Transverse colon (tissue), 4 donors: ENCODE measurements at regions of chr10 and their contacts with region 1.

Region 1: GRCh38 chr10:129438024-129438423 is 29.0 kb upstream of the MGMT start:
- DNase-seq: no peak
- H3K4me3 ChIP-seq: no peak overlapping the region
- H3K27ac ChIP-seq: no peak overlapping the region
- H3K4me1 ChIP-seq: no peaks in the 10 kb centered on the region
- H3K27me3 ChIP-seq: no peaks in the 10 kb centered on the region
- CTCF ChIP-seq: no peak
- EP300 ChIP-seq: no peak
- POLR2A ChIP-seq: no peak

Region 2: DNA sequence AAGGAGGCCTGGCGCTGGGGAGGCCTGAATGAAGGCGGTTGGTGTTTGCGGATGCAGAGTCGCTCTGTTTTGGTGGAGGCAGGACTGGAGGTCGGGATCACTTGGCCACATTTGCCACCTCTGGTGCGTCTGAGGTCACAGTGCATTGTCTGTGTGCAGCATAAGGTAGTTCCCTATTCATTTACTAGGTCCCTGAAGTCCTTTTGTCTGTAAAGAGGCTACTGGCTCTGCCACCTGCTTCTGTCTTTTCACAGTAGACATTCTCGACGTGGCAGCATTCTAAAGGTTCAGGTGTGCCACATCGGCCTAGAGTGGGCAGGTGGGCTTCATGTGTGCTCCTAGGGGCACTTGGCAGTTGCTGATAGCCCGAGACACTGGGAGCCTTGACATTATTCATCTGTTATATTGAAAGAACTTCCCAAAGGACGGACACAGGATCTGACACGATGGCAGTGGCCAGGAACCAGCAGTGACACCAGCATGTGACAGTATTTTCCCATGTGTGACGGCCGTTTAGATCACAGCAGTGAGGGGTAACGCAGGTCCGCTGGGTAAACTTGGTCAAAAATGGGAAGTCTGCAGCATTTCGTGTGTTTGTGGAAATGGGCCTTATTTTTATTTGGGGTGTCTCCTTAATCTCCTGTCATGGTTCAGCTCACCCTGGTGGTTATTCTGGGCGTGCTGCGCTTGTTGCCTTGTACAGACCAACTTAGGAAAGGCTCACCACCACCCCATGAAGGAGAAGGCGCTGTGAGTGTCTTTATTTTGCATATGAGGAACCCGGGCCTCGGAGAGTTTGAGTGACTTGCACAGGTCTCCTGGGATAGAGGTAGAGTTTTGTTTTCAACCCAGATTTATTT is 34.9 kb after region 1 on chr10:
- in situ Hi-C with region 1: no loop called
- intact Hi-C with region 1: no loop called
- DNase-seq: no peak
- H3K4me3 ChIP-seq: no peak overlapping the region
- H3K27ac ChIP-seq: no peak overlapping the region
- H3K4me1 ChIP-seq: peaks cover 0 to 3% (median under 1%) of the 10 kb centered on the region in 4 donors
- H3K27me3 ChIP-seq: no peaks in the 10 kb centered on the region
- CTCF ChIP-seq: no peak
- EP300 ChIP-seq: no peak
- POLR2A ChIP-seq: no peak

Region 3: GRCh38 chr10:131346456-131346855 is 1908.4 kb after region 1 on chr10:
- in situ Hi-C with region 1: no loop called
- intact Hi-C with region 1: loop called (anchors 10 kb)
- DNase-seq: no peak
- H3K4me3 ChIP-seq: no peak overlapping the region
- H3K27ac ChIP-seq: no peak overlapping the region
- H3K4me1 ChIP-seq: no peaks in the 10 kb centered on the region
- H3K27me3 ChIP-seq: no peaks in the 10 kb centered on the region
- CTCF ChIP-seq: no peak
- EP300 ChIP-seq: no peak
- POLR2A ChIP-seq: no peak